Uterus (tissue), 4 donors: ENCODE measurements at regions of chr4 and their contacts with region 1.

Region 1: GRCh38 chr4:80215449-80216052 is 18.2 kb downstream of the PRDM8 start:
- DNase-seq: no peak
- H3K4me3 ChIP-seq: no peak overlapping the region
- H3K27ac ChIP-seq: no peak overlapping the region
- H3K4me1 ChIP-seq: no peaks in the 10 kb centered on the region
- H3K27me3 ChIP-seq: peaks cover 0 to 4% of the 10 kb centered on the region in 2 donors
- CTCF ChIP-seq: peak; percentile 57 to 73 (median 66)
- POLR2A ChIP-seq: no peak

Region 2: DNA sequence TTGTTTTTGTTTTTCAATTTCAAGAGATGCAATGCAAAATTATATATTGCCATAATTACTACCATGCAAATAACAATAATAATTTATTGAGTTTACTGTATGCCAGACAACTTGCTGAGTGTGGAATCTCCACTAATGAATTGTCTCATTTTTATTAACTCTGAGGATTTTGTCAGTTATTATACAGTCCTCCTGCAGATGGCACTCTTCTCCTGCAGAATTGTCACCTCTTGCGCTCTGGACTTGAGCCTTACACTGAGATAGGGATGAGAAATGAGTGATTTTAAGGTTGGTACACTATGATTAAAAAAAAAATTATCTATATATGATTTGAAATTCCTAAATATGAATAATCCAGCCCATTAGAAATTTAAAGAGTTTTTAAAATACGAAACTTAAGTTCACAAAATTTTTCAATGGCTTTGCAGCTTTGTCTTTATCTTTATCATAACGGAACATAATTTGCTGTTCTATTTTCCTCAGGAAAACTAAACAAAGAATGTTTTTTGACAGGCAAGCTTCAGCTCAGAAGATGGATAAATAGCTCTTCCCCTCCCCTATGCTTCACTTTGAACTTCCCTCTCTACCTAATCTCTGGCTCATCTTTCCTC is 1263.6 kb before region 1 on chr4:
- intact Hi-C with region 1: loop called (anchors 5 kb)
- DNase-seq: no peak
- H3K4me3 ChIP-seq: no peak overlapping the region
- H3K27ac ChIP-seq: no peak overlapping the region
- H3K4me1 ChIP-seq: no peaks in the 10 kb centered on the region
- H3K27me3 ChIP-seq: no peaks in the 10 kb centered on the region
- CTCF ChIP-seq: peak; percentile 68 to 77 (median 74)
- POLR2A ChIP-seq: no peak